PC-9 (cell line): ENCODE measurements at regions of chr1 and their contacts with region 1.

Region 1: DNA sequence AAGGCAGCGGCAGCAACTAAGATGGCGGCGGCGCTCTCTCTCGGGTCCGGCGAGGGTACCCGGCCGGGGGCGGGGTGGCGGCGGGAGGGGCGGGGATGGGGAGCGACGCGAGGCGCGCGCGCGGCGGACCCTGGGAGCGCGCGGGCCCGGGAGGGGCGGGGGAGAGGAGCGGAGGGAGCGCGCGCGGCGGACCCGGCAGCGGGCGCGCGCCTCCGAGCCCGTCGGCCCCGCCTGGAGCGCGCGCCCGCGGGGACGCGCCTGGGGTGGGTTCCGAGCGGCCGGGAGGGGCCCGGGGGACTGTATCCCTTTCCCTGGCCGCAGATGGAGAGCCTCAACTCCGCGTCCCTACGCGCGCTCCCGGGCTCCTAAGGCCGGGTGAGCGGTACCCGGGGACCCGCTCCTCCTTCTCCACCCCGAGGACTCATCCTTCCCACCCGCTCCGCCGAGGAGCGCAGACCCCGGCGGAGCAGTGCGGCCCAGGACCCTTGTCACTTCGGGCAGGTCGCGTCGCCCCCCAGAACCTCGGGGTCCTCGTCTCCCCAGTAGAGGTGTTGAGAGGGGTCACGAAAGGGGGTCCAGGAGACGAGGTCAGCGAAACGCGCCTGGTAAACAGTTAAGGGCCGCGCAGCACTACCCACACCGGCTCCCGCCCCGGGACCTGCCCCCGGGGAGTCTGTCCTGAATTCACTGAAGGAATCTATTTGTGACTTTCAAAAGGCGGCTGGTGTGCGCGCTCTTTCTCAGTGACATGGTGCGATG is at the start of gene CLSTN1:
- DNase-seq: peak; percentile 43 to 83
- H3K4me3 ChIP-seq: peak within 1 kb of the TSS; percentile 95
- H3K27ac ChIP-seq: peak within 1 kb of the TSS; percentile 61
- H3K4me1 ChIP-seq: peaks cover 36% of the 10 kb centered on the region
- H3K27me3 ChIP-seq: no peaks in the 10 kb centered on the region
- CTCF ChIP-seq: no peak
- total RNA-seq, gene CLSTN1: 138 and 140 TPM in 2 replicates

Region 2: DNA sequence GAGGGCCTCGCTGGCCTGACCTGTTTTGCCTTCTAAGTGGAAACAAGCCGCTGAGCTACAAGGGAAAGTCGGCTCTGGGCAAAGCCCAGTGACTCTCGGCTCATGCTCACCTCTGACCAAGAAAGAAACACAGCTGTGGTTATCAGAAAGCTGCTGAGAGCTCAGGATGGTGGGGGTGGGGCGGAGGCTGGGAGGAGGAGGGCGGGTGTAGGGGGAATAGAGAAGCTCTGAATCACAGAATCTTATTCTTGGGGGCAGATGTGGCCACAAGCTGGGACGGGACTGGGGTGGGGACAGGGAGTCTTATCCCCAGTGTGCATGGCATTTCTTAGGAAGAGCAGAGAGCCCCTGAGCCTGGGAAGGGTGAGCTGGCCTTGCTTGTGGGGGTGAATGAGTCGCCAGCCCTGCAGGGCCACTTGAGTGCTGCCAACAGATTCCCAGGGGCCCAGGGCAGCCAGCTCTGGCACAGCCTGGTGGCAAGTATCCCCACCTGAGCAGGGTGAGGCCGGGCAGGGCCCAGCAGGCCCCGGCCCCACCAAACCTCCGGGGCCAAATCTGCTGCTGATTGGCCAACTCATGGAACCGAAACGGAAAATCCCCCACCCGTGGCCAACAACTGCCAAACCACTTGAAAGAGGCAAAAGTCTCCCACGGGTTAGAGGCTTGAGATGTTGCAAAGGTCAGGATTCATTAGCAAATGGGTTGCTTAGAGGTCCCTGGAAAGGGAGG is 410.8 kb before region 1 on chr1:
- CTCF ChIA-PET with region 1: interaction called, 3 read pairs
- POLR2A ChIA-PET with region 1: interaction called, 13 read pairs
- intact Hi-C with region 1: no loop called
- DNase-seq: peak; percentile 78 to 83
- H3K4me3 ChIP-seq: 0 out of 2 replicates have a peak overlapping the region, but pooled peaks have one; percentile 14
- H3K27ac ChIP-seq: peak overlapping the region; percentile 91
- H3K4me1 ChIP-seq: peaks cover 32% of the 10 kb centered on the region
- H3K27me3 ChIP-seq: no peaks in the 10 kb centered on the region
- CTCF ChIP-seq: no peak

Region 3: DNA sequence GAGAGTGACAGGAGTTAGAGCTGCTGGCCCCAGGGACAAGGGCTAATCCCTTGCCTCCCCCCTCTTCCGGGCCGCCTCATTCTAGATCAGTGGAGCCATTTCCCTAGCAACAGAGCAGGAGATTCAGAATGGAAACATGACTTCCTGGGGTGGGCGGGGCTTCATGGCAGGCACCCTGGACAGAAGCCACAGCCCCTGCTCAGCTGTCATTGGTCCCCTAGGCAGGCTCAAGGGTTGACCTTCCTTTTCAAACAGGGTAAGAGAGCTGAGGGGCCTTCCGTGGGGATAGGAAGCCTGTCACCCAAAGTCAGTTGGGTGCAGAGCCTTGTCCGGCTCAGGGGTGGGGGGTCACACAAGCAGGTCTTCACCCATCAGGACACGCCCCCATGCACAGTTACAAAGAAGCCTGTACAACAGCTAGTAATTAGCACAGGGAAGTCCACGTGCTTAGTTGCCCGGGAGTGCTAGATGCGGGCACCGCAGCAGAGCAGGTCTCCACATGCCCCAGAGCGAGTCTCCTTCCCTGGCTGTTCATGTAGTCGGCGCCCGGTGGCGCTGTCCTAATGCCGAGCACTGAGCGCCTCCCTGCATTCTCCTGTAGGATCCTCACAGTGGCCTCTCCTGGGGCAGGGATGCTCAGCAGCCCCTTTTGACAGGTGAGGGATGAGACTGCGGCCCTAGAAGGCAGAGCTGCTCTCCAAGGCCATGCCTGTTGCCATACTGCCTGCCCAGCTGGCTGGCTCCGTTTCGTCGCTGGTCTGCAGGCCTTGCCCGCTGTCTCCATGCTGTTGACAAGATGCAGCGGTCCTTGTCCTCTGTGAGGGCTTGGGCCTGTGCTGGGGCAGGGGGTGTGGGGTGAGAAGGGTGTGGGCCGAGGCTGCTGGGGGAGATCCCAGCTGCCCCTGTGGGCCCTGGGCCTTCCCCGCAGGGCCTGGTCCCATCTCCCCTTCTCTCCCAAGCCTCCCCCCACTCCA is 230.3 kb before region 1 on chr1:
- CTCF ChIA-PET with region 1: no interaction called
- POLR2A ChIA-PET with region 1: no interaction called
- intact Hi-C with region 1: no loop called
- DNase-seq: peak in 1 of 2 experiments; percentile 16
- H3K4me3 ChIP-seq: no peak overlapping the region
- H3K27ac ChIP-seq: no peak overlapping the region
- H3K4me1 ChIP-seq: no peaks in the 10 kb centered on the region
- H3K27me3 ChIP-seq: no peaks in the 10 kb centered on the region
- CTCF ChIP-seq: no peak

Region 4: DNA sequence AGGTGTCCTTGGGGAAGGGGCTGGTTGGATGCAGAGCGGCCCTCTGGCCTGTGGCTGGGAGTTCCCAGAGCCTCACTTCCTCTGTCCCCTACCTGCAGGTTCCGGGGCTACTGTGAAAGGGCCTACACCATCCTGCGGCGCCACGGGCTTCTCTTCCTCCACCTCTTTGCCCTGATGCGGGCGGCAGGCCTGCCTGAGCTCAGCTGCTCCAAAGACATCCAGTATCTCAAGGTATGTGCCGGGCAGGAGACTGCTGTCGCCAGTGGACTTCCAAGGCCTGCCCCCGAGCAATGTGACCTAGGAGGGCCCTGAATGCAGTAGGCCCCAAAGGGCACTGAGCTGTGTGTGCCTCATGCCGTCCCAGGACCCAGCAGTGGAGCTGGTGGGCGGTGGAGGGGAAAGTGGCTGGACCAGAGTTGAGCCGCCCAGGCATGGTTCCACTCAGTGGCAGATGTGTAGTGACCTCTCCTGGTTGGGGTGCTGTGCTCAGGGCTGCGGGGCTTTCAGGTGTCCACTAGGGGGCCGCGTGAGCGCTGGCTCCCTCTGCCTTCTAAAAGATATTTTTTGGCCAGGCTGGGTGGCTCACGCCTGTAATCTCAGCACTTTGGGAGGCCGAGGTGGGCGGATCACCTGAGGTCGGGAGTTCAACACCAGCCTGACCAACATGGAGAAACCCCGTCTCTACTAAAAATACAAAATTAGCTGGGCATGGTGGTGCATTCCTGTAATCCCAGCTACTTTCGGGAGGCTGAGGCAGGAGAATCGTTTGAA is 99.2 kb before region 1 on chr1:
- CTCF ChIA-PET with region 1: no interaction called
- POLR2A ChIA-PET with region 1: no interaction called
- intact Hi-C with region 1: no loop called
- DNase-seq: peak in 1 of 2 experiments; percentile 65
- H3K4me3 ChIP-seq: no peak overlapping the region
- H3K27ac ChIP-seq: no peak overlapping the region
- H3K4me1 ChIP-seq: no peaks in the 10 kb centered on the region
- H3K27me3 ChIP-seq: no peaks in the 10 kb centered on the region
- CTCF ChIP-seq: peak; percentile 84

Region 5: DNA sequence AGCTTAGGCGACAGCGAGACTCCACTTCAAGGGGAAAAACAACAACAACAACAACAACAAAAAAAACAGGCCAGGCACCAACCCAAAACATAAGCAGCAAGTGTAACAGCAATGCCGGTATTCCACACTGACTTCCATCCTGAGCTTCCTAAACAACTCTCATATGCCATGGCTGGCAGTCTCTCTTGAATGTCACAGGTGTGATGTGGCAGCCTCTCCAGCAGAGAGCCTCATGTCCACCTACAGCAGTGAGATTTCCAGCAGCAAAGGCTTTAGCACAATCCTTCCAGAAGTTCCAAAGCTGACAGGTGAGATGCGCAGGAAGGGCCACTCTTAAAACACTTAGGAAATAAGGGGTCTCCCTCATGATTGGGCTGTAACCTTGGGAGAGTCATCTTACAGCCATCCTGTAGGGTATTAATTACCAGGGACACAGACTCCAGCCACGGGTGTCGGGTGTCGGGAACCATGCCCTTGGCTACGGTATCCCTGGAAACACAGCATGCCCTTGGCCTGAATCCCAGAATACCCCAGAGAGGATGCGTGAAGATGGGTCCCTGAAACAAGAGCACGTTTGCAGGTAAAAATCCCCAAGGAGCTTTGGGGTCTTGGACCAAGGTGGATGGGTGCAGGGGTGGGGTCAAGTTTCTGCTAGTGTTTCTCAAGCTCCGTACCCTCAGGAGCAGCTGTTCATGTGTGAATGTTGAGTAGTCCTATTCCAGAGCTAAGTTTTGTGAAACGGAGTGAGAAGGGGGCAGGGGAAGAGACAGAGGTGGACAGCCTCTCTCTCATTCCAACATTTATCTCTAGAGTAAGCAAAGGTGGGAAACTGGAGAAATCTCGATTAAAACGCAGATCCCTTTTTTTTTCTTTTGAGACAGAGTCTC is 31.7 kb before region 1 on chr1:
- CTCF ChIA-PET with region 1: interaction called, 12 read pairs
- POLR2A ChIA-PET with region 1: no interaction called
- intact Hi-C with region 1: no loop called
- DNase-seq: peak in 1 of 2 experiments; percentile 44
- H3K4me3 ChIP-seq: no peak overlapping the region
- H3K27ac ChIP-seq: no peak overlapping the region
- H3K4me1 ChIP-seq: no peaks in the 10 kb centered on the region
- H3K27me3 ChIP-seq: no peaks in the 10 kb centered on the region
- CTCF ChIP-seq: no peak

Region 6: GRCh38 chr1:9835758-9836450 is 11.8 kb after region 1 on chr1:
- CTCF ChIA-PET with region 1: interaction called, 3 read pairs
- POLR2A ChIA-PET with region 1: interaction called, 4 read pairs
- intact Hi-C with region 1: loop called (anchors 1 kb)
- DNase-seq: peak in 1 of 2 experiments; percentile 50
- H3K4me3 ChIP-seq: no peak overlapping the region
- H3K27ac ChIP-seq: peak overlapping the region; percentile 56
- H3K4me1 ChIP-seq: peaks cover 22% of the 10 kb centered on the region
- H3K27me3 ChIP-seq: no peaks in the 10 kb centered on the region
- CTCF ChIP-seq: no peak

Region 7: GRCh38 chr1:9860887-9861286 is 36.8 kb after region 1 on chr1:
- CTCF ChIA-PET with region 1: interaction called, 12 read pairs
- POLR2A ChIA-PET with region 1: no interaction called
- intact Hi-C with region 1: no loop called
- DNase-seq: no peak
- H3K4me3 ChIP-seq: no peak overlapping the region
- H3K27ac ChIP-seq: no peak overlapping the region
- H3K4me1 ChIP-seq: no peaks in the 10 kb centered on the region
- H3K27me3 ChIP-seq: no peaks in the 10 kb centered on the region
- CTCF ChIP-seq: no peak

Region 8: DNA sequence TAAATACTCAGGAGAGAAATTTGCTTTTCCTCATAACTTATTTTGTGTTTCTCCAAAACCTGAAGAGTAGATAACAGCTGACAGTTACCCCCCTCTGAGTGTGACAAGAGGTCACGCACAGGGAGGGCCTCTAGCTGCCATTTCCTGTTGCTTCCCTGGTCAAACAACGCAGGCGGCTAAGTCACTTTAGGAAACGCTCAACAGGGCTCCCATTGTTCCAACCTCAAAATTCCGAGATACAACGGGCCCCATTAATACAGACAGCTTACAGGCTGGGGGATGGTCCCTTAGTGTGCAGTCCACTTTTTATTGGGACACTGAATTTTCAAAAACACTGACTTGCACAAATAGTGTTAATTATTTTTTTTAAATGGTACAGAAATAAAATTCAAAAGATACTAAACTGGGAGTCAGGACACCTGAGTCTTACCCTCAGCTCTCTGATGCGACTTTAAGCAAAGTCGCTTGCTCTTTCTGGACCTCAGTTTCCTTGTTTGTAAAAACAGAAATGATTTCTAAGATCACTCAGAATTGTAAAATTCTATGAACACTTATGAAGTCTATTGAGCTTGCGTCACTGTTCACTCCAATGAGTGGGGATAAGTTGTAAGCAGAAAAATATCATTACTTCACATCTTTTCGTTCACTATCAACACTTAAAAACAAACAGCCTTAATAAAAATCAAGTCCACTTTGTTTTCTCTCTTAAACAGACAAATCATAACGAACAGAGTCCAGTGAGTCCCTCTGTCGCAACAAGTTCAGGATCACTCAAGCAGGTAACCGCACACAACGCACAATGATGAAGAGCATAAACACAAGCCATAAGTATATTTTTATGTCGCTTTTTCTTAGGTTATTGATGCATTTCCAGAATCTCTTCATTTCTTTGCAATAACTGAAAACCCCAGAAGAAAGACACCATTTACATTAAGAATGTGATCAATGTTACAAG is 105.6 kb after region 1 on chr1:
- CTCF ChIA-PET with region 1: interaction called, 11 read pairs
- POLR2A ChIA-PET with region 1: no interaction called
- intact Hi-C with region 1: no loop called
- DNase-seq: no peak
- H3K4me3 ChIP-seq: no peak overlapping the region
- H3K27ac ChIP-seq: no peak overlapping the region
- H3K4me1 ChIP-seq: no peaks in the 10 kb centered on the region
- H3K27me3 ChIP-seq: no peaks in the 10 kb centered on the region
- CTCF ChIP-seq: no peak